Calu3 (cell line): ENCODE measurements at regions of chr10 and their contacts with region 1.

Region 1: GRCh38 chr10:112915590-112916572 is 34.2 kb upstream of the TCF7L2 start:
- DNase-seq: peak; percentile 65
- H3K4me3 Mint-ChIP-seq: peak overlapping the region; percentile 46
- H3K27ac Mint-ChIP-seq: peak overlapping the region; percentile 93
- H3K4me1 Mint-ChIP-seq: peaks cover 31% of the 10 kb centered on the region
- H3K27me3 Mint-ChIP-seq: no peaks in the 10 kb centered on the region
- CTCF ChIP-seq: no peak

Region 2: GRCh38 chr10:112842832-112843360 is 73.0 kb before region 1 on chr10:
- CTCF ChIA-PET with region 1: no interaction called
- intact Hi-C with region 1: loop called (anchors 10 kb)
- DNase-seq: no peak
- H3K4me3 Mint-ChIP-seq: no peak overlapping the region
- H3K27ac Mint-ChIP-seq: no peak overlapping the region
- H3K4me1 Mint-ChIP-seq: peaks cover 19% of the 10 kb centered on the region
- H3K27me3 Mint-ChIP-seq: no peaks in the 10 kb centered on the region
- CTCF ChIP-seq: no peak

Region 3: GRCh38 chr10:113216102-113216501 is 300.2 kb after region 1 on chr10:
- CTCF ChIA-PET with region 1: no interaction called
- intact Hi-C with region 1: no loop called
- DNase-seq: no peak
- H3K4me3 Mint-ChIP-seq: no peak overlapping the region
- H3K27ac Mint-ChIP-seq: no peak overlapping the region
- H3K4me1 Mint-ChIP-seq: no peaks in the 10 kb centered on the region
- H3K27me3 Mint-ChIP-seq: no peaks in the 10 kb centered on the region
- CTCF ChIP-seq: no peak